Heart right ventricle (tissue), 16 donors: ENCODE measurements at regions of chr7 and their contacts with region 1.

Region 1: DNA sequence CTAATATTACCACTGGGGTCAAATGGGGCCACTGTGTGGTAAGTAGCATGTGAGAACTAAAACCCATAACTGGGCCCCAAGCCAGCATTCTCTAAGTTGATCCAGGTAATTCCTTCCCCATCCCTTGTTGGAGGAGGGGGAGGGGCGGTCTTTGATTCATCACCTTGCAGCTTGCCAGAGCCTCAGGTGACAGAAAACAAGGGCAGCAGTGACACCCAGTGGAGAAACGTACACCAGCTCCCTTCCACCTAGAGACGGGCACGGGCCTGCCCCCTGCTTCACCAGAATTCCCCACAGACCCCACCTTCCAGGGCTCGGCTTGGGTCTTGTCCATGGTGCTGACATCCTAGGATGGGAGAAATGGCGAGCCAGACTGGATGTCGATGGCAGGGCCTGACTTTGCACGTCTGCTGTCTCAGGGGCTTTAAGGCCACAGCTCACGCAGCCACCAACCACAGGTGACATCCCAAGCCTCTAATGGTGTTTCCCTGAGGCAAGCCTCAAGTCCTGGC is 102.0 kb downstream of the STRA8 start:
- DNase-seq: peak in 1 of 2 donors; percentile 32
- ATAC-seq: peak in 7 of 8 donors; percentile 42 to 85 (median 67)
- H3K4me3 ChIP-seq: no peak overlapping the region
- H3K27ac ChIP-seq: no peak overlapping the region
- H3K4me1 ChIP-seq: no peaks in the 10 kb centered on the region
- H3K27me3 ChIP-seq: no peaks in the 10 kb centered on the region
- CTCF ChIP-seq: peak in 8 of 9 donors; percentile 10 to 51 (median 42)

Region 2: GRCh38 chr7:135299235-135299634 is 36.4 kb before region 1 on chr7:
- intact Hi-C with region 1: loop called in 1 of 10 experiments (anchors 5 kb)
- DNase-seq: no peak
- ATAC-seq: no peak
- H3K4me3 ChIP-seq: no peak overlapping the region
- H3K27ac ChIP-seq: no peak overlapping the region
- H3K4me1 ChIP-seq: no peaks in the 10 kb centered on the region
- H3K27me3 ChIP-seq: peaks cover 0 to 5% (median 0%) of the 10 kb centered on the region in 7 donors
- CTCF ChIP-seq: no peak

Region 3: GRCh38 chr7:135536150-135536549 is 200.5 kb after region 1 on chr7:
- intact Hi-C with region 1: no loop called
- DNase-seq: no peak
- ATAC-seq: peak in 1 of 8 donors; percentile 33
- H3K4me3 ChIP-seq: no peak overlapping the region
- H3K27ac ChIP-seq: no peak overlapping the region
- H3K4me1 ChIP-seq: no peaks in the 10 kb centered on the region
- H3K27me3 ChIP-seq: no peaks in the 10 kb centered on the region
- CTCF ChIP-seq: no peak